Activated CD4-positive, alpha-beta memory T cell treated with anti-CD3 and anti-CD28 coated beads, Interleukin-2, amount 10 ng/mL, durations not matched to agents 7 days and 5 days (primary cell): ENCODE measurements at regions of chr3 and their contacts with region 1.

Region 1: DNA sequence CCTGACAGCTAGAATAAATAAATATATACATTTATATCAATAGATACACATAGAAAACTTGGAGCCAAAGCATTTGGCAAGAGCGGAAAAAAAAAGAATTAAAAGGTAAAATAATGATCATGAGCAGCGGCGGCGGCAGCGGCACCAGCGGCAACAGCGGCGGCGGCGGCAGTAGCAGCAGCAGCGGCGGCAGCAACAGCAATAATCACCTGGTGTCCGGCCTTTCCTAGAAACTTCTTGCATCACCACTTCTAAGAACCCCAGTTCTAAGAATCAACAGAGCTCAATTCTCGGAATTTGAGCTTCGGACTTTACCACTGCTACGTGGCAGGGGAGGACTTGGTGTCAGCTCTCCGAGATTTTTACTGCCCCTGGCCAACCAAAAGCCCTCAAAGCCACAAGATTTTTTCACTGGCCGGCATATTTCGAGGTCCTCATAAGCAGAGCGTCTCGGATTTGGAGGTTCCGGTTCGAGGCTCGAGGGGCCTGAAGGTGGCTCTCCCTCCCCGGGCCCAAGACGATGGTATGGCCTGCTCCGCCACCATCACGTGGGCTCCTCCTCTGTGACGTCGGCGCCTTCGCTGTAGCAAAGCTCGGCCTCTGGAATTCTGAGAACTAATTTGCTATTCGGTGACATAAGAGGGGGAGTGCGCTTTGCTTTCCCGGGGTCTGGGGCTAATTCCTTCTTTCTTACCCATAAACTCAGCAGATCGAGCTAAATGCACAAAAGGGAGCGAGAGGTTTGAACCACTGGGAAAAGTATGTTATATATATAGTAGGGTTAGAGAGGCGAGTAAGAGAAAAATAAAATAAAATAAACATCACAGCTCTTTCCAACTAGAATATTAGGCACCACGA is at the start of gene BCL6:
- DNase-seq: peak; percentile 91
- H3K4me3 Mint-ChIP-seq: peak within 1 kb of the TSS; percentile 89
- H3K27ac Mint-ChIP-seq: peak within 1 kb of the TSS; percentile 99
- H3K4me1 Mint-ChIP-seq: peaks cover 56% of the 10 kb centered on the region
- H3K27me3 Mint-ChIP-seq: no peaks in the 10 kb centered on the region
- total RNA-seq, gene BCL6: 30.4 to 33.4 TPM

Region 2: DNA sequence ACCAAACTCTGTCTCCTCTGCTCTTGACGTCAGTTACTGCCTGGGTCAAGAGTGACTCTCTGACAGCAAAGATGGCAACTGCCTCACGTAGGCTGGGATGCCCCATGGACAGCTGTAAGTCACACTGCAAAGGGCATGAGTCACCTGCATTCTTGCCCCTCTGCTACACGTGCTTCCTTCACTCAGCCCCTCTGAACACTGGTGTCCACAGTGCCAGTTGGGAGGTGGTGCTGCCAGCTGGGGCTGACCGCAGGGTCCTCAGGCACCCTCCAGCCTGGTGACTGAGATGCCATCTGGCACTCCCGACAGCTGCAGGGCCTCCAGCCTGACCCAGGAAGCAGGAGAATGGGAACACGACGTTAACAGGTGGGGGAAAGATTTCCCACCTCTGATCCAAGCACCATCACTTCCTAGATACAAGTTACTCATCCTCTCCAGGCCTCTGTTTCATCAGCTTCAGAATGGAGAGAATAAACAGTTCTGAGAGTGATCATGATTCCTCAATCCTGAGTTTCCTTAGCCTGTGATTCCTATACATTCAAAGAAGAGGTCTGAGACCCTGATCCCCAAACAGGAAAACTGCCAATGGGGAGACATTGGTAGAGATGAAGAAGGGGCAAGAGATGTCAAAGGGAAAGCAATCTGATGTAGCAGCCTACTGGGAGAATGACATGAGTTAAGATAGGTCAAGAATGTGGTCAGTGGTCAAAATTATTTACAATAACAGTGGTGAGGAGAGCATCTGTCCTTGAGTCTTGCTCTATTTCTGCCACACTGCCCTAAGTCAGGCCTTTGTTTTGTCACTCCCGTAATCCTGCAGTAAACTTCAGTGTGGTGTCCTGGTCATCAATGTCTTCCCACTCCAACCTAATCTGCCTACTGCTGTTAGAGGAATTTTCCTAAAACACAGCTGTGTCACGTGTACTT is 86.0 kb after region 1 on chr3:
- CTCF ChIA-PET with region 1: interaction called, 20 read pairs
- POLR2A ChIA-PET with region 1: interaction called, 4 read pairs
- DNase-seq: no peak
- H3K4me3 Mint-ChIP-seq: no peak overlapping the region
- H3K27ac Mint-ChIP-seq: no peak overlapping the region
- H3K4me1 Mint-ChIP-seq: peaks cover 31% of the 10 kb centered on the region
- H3K27me3 Mint-ChIP-seq: no peaks in the 10 kb centered on the region

Region 3: DNA sequence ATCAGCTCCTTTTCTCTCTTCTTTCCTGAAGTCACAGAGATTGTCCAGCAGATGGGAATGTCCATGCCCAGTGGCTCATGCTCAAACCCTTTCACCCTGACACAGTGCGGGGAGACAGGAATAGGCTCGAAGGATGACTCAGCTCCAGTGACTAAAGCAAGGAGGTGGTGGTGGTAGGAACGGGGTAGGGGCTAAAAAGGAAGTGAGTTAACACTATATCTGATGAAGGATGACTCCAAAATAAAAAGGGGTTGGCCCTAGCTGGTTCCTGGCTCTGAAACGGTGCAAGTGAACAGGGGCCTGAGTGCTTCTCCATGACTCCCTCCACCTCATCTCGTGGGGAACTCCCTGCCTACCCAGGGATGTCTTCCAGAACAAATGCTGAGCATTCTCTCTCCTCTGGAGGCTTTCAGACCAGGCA is 241.1 kb after region 1 on chr3:
- CTCF ChIA-PET with region 1: interaction called, 8 read pairs
- POLR2A ChIA-PET with region 1: interaction called, 18 read pairs
- DNase-seq: peak; percentile 60
- H3K4me3 Mint-ChIP-seq: peak overlapping the region; percentile 6
- H3K27ac Mint-ChIP-seq: peak overlapping the region; percentile 74
- H3K4me1 Mint-ChIP-seq: peaks cover 51% of the 10 kb centered on the region
- H3K27me3 Mint-ChIP-seq: no peaks in the 10 kb centered on the region

Region 4: DNA sequence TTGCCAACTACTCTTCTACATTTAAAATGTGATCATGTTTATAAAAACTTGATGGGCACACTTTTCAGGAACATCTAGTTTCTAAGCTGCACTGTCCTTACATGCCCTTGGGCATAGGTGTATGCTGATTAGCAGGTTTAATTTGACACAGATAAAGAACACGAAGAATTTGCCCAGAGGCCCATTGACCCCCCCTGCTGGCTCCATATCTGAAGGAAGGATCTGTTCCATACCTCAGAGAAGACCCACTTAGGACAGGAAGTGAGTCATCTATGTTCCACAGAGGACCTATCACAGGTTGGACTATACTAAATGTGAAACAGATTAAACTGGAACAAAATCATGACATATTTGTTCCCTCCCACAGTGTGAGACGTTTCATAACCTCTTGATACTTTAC is 315.7 kb after region 1 on chr3:
- CTCF ChIA-PET with region 1: interaction called, 10 read pairs
- POLR2A ChIA-PET with region 1: interaction called, 11 read pairs
- DNase-seq: peak; percentile 63
- H3K4me3 Mint-ChIP-seq: no peak overlapping the region
- H3K27ac Mint-ChIP-seq: no peak overlapping the region
- H3K4me1 Mint-ChIP-seq: peaks cover 18% of the 10 kb centered on the region
- H3K27me3 Mint-ChIP-seq: no peaks in the 10 kb centered on the region

Region 5: GRCh38 chr3:188217011-188217463 is 471.6 kb after region 1 on chr3:
- CTCF ChIA-PET with region 1: no interaction called
- POLR2A ChIA-PET with region 1: no interaction called
- DNase-seq: no peak
- H3K4me3 Mint-ChIP-seq: no peak overlapping the region
- H3K27ac Mint-ChIP-seq: no peak overlapping the region
- H3K4me1 Mint-ChIP-seq: peaks cover 9% of the 10 kb centered on the region
- H3K27me3 Mint-ChIP-seq: no peaks in the 10 kb centered on the region

Region 6: GRCh38 chr3:188954590-188955208 is 1209.3 kb after region 1 on chr3:
- CTCF ChIA-PET with region 1: interaction called, 493 read pairs
- POLR2A ChIA-PET with region 1: interaction called, 57 read pairs
- DNase-seq: peak; percentile 82
- H3K4me3 Mint-ChIP-seq: no peak overlapping the region
- H3K27ac Mint-ChIP-seq: no peak overlapping the region
- H3K4me1 Mint-ChIP-seq: peaks cover 11% of the 10 kb centered on the region
- H3K27me3 Mint-ChIP-seq: peaks cover 2% of the 10 kb centered on the region